WTC11 (cell line): ENCODE measurements at regions of chr2 and their contacts with region 1.

Region 1: DNA sequence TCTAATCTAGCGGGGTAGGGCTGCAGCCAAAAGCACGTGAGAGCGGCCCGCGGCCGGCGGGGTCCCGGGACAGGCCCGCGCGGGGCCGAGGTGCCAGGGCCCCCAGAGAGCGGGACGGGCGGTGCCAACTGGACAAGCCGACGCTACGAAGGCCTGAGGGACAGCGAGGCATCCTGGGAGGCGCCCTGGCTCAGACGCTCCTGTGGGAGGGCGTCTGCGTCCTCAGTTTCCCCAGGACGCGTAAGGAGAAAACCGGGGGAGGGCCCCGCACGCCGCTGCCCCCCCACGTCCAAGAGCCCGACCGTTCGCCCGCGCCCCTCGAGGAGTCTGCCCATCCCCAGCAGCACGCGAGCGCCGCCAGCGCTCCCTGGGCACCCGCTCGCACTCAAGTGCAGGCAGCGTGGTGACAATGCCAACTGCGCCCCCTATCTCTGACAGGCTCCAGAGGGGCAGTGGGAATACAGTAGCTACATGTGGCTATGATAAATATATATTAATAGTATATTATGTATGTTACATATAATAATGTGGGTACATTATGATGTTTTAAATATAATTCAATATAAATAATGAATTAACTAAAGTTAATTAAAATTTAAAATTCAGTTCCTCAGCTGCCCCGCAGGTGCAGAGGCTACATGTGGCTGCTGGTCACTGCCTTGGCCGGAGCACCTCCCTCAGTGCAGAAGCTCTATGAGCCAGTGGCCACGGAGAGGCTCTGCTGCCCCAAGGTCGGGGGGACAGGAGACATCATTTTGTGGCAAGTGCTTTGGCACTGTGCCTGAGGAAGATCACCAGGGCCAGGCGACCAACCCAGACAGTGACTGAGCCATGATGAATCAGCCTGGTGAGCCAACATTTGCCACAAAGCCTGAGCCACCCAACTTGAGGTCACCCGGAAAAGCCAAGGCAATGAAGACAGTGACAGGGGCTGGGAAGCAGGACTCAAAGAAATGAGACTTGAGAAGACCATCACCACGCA is 5.5 kb upstream of the SFT2D3 start:
- DNase-seq: peak; percentile 72
- ATAC-seq: peak; percentile 73
- H3K4me3 Mint-ChIP-seq: no peak overlapping the region
- H3K27ac Mint-ChIP-seq: no peak overlapping the region
- H3K4me1 Mint-ChIP-seq: peaks cover 11% of the 10 kb centered on the region
- H3K27me3 Mint-ChIP-seq: peaks cover 46% of the 10 kb centered on the region
- CTCF ChIP-seq: peak; percentile 34; the same call in 1 of the 2 replicates

Region 2: DNA sequence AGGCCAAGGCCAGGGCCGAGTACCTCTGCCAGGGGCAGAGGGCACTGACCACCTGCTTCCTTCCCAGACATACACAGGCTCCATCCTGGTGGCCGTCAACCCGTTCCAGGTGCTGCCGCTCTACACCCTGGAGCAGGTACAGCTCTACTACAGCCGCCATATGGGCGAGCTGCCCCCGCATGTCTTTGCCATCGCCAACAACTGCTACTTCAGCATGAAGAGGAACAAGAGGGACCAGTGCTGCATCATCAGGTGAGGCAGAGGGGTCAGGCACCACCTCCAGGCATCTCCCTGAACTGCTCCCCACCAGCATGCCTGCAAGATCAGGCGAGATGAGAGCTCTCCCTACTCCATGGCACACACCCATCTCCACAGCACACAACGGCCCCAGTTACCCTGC is 129.2 kb before region 1 on chr2:
- CTCF ChIA-PET with region 1: interaction called, 12 read pairs
- POLR2A ChIA-PET with region 1: no interaction called
- DNase-seq: no peak
- ATAC-seq: peak; percentile 65
- H3K4me3 Mint-ChIP-seq: no peak overlapping the region
- H3K27ac Mint-ChIP-seq: no peak overlapping the region
- H3K4me1 Mint-ChIP-seq: peaks cover 6% of the 10 kb centered on the region
- H3K27me3 Mint-ChIP-seq: no peaks in the 10 kb centered on the region
- CTCF ChIP-seq: no peak

Region 3: GRCh38 chr2:127649684-127650040 is 46.1 kb before region 1 on chr2:
- CTCF ChIA-PET with region 1: interaction called, 12 read pairs
- POLR2A ChIA-PET with region 1: no interaction called
- DNase-seq: peak; percentile 88
- ATAC-seq: peak; percentile 74
- H3K4me3 Mint-ChIP-seq: no peak overlapping the region
- H3K27ac Mint-ChIP-seq: no peak overlapping the region
- H3K4me1 Mint-ChIP-seq: peaks cover 9% of the 10 kb centered on the region
- H3K27me3 Mint-ChIP-seq: peaks cover 2% of the 10 kb centered on the region; the same call in 1 of the 2 replicates
- CTCF ChIP-seq: peak; percentile 72

Region 4: GRCh38 chr2:127675331-127676261 is 20.2 kb before region 1 on chr2 and contains the start of gene LIMS2:
- CTCF ChIA-PET with region 1: interaction called, 17 read pairs
- POLR2A ChIA-PET with region 1: interaction called, 6 read pairs
- DNase-seq: peak; percentile 52
- ATAC-seq: peak; percentile 57
- H3K4me3 Mint-ChIP-seq: peak within 1 kb of the TSS; percentile 79
- H3K27ac Mint-ChIP-seq: no peak within 1 kb of the TSS
- H3K4me1 Mint-ChIP-seq: peaks cover 9% of the 10 kb centered on the region
- H3K27me3 Mint-ChIP-seq: peaks cover 61% of the 10 kb centered on the region
- CTCF ChIP-seq: no peak
- total RNA-seq, gene LIMS2: 1.9 to 2.5 TPM (median 2.4 TPM) in 3 replicates

Region 5: DNA sequence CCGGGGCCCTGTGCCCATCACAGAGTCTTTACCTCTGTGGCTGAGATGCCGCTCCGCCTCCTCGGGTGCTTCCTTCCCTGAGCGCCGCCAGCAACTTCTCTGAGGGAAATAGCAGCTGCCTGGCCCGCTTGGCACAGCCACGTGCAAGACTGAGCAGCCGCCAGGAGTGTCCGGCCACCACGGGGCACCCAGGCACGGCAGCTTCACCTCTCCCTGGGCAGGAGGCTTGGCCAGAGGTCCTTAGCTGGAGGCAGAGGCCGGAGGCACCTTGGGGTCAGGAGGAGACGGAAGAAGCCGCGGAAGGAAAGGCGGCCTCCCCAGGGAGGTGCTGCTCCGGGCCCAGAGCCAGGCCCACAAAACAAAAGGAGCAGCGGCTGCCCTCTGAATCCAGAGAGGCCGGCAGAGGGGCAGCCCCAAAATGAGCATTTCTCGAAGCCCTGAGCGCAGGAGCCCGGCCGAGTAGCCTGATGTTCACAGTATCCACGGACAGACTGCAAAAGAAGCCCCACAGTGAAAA is 14.4 kb before region 1 on chr2:
- CTCF ChIA-PET with region 1: interaction called, 17 read pairs
- POLR2A ChIA-PET with region 1: interaction called, 6 read pairs
- DNase-seq: no peak
- ATAC-seq: peak; percentile 55
- H3K4me3 Mint-ChIP-seq: no peak overlapping the region
- H3K27ac Mint-ChIP-seq: no peak overlapping the region
- H3K4me1 Mint-ChIP-seq: no peaks in the 10 kb centered on the region
- H3K27me3 Mint-ChIP-seq: peaks cover 23% of the 10 kb centered on the region
- CTCF ChIP-seq: no peak